Ascending aorta (tissue), 2 donors: ENCODE measurements at regions of chr16 and their contacts with region 1.

Region 1: DNA sequence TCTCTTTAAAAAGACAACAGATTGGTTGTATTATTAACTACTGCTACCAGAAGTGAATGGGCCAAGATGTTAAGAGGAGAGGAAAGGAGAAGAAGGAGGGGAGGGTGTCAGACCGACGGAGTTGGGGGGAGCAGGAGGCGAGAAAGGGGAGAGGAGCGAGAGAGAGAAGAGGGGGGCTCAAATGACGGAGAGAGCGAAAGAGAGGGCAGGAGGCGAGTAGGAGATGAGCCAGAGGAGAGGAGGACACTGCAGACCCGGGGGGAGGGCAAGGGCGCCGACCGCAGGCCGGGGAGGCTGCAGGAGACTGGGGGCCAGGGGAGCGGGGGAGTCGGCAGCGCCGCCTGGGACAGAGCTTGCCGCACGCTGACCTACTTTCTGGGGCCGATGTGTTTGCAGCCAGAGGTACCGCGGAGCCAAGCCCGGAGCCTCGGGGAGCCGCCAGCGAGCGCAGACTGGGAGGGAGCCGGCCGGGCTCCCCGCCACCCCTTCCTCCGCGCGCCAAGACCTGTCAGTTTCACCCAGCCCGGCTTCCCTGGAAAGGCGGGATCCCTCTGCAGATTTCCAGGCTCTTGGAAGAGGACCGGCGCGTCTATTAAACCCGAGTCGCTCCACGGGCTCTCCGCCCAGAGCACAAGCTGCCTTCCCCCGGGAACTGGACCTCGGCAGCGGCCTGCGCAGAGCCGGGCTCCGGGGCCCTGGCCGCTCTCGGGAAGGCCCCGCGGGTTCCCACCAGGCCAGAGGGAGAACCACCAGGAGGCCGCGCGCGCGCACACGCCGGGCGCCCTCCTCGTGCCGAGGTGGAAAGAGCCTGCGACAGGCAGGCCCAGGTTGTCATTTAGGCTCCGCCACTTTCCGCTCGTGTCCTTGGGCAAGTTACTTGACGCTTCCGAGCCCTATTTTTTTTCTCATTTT is 74.6 kb downstream of the CMC2 start:
- DNase-seq: peak in 1 of 2 donors; percentile 69
- H3K4me3 ChIP-seq: peak overlapping the region; percentile 63 to 67
- H3K27ac ChIP-seq: peak overlapping the region; percentile 89 to 94
- H3K4me1 ChIP-seq: peaks cover under 1 to 2% of the 10 kb centered on the region in 2 donors
- H3K27me3 ChIP-seq: no peaks in the 10 kb centered on the region
- CTCF ChIP-seq: peak in 1 of 3 experiments; percentile 4

Region 2: GRCh38 chr16:80540516-80541272 is 391.4 kb before region 1 on chr16 and contains the start of gene DYNLRB2:
- intact Hi-C with region 1: loop called (anchors 10 kb)
- DNase-seq: peak; percentile 56 to 94
- H3K4me3 ChIP-seq: peak within 1 kb of the TSS; percentile 81
- H3K27ac ChIP-seq: peak within 1 kb of the TSS; percentile 51 to 60
- H3K4me1 ChIP-seq: no peaks in the 10 kb centered on the region
- H3K27me3 ChIP-seq: no peaks in the 10 kb centered on the region
- CTCF ChIP-seq: no peak
- total RNA-seq, gene DYNLRB2: not detected

Region 3: DNA sequence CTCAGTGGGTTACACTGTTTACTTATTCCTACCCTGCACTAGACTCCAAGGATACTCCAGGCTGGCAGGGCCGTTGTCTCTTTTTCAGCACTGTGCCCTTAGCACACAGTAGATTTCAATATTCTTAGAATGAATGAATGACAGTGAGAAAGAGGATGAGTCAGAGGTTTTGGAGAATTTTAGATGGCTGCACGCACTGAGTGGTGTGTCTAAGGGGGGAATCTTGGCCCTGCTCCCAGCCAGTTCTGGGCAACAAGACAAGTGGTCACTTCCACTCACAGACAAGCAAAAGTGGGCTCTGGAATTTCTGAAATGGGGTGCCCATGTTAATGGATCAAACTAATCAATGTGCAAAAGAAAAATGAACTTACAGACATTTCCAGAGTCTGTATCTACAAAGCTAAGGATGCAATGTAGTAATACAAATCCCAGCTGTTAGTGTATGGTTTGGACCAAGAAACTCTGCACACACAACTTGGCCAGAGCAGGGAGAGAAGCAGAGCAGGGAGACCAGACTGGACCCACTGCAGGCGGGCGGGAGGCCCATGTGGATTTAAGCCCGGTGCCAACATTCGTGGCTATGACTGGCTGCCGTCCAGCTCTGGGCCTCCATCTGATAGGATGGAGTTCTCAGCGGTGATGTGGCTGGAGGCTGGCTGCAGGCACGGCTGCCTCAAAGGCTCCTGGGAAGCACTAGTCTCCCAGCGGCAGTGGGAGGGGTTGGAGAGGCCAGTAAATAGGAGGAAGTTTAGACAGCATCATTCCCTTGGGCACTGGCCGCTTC is 32.1 kb before region 1 on chr16:
- intact Hi-C with region 1: loop called (anchors 1 kb)
- DNase-seq: peak; percentile 77 to 96
- H3K4me3 ChIP-seq: peak overlapping the region in 1 of 2 donors; percentile 38
- H3K27ac ChIP-seq: peak overlapping the region; percentile 76 to 77
- H3K4me1 ChIP-seq: peaks cover 9% of the 10 kb centered on the region in 2 donors
- H3K27me3 ChIP-seq: no peaks in the 10 kb centered on the region
- CTCF ChIP-seq: no peak

Region 4: DNA sequence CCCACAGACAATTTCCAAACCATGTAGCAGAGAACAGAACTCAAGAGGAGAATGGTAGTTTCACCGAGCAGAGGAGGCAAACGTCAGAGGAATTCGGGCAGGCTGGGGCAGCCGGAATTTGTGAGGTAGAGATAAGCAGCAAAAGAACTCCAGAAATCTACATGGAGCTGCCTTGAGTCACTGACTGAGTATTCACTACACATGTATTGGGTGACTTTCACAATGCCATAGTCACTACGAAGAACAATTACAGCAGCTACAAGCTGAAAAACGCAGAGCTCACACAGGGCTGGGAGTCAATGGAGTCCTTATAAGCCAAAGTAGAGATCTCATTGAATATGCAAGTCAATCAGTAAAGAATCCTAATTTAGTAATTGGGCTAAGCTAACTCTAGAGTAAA is 61.2 kb after region 1 on chr16:
- intact Hi-C with region 1: loop called (anchors 5 kb)
- DNase-seq: peak in 1 of 2 donors; percentile 69
- H3K4me3 ChIP-seq: peak overlapping the region; percentile 21 to 33
- H3K27ac ChIP-seq: peak overlapping the region; percentile 33 to 76
- H3K4me1 ChIP-seq: peaks cover 0 to 4% of the 10 kb centered on the region in 2 donors
- H3K27me3 ChIP-seq: no peaks in the 10 kb centered on the region
- CTCF ChIP-seq: no peak